MCF 10A (cell line): ENCODE measurements at regions of chr12 and their contacts with region 1.

Region 1: DNA sequence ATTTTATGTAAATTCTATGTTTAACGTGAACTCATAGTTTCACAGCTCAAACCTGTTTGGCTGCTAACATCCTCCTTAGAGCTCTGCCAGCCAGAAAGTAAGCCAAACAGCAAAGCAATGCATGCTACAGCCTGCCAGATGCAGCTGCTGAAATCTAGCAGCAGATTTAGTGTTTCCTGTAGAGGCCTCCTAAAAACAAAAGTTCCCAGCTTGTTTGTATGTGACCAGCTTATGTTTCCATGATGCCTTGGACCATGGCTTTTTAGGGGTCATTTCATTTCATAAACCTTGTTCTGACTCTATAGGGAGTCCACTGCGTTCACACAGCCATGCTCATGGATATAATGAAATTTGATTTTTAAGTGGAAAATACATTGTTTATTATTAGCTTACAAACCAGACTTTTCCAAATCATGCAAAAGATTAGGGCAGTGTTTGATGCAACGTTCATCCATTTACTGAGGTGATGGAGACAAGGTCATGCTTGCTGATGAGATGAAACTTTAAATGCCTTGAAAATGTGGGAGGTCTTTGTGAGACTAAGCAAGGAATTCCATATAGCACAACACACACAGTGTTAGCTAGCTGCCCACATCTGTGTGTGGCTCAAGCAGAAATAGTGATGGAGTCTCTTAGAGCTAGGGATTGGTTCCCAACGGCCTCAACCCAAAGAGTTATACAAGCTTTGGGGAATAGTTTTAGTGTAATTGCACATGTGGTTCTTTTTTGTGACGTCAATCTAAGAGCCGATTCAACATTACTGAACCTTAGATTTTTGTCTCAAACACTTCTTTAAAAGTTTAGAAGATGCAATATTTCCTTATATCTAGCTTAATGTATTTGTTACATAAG is 157.5 kb upstream of the LRIG3 start:
- DNase-seq: peak; percentile 49
- H3K4me3 Mint-ChIP-seq: no peak overlapping the region
- H3K27ac Mint-ChIP-seq: peak overlapping the region; percentile 86
- H3K4me1 Mint-ChIP-seq: peaks cover 43% of the 10 kb centered on the region
- H3K27me3 Mint-ChIP-seq: no peaks in the 10 kb centered on the region
- CTCF ChIP-seq: no peak

Region 2: DNA sequence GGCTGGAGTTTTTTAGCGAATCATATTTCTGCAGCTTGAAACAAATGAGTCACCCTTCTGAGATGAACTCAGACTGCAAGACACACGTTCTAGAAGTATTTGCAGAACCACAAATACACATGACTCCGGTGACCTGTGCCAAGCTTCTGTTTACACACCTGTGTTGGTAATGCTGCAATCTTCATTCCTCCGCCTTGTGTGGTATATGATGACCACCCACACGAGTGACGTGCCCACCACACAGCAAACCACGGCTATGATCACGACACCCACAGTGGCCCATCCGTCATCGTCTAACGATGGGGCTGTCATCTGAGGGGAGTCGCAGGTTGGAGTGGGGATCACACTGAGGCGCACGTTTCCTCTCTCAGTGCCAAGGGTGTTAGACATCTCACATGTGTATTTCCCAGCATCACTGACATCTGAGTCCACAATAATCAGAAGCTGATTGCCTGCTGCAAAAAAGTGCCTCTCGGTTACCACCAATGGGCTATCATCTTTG is 200.5 kb before region 1 on chr12:
- CTCF ChIA-PET with region 1: no interaction called
- POLR2A ChIA-PET with region 1: interaction called, 26 read pairs
- intact Hi-C with region 1: loop called (anchors 5 kb)
- DNase-seq: peak; percentile 94
- H3K4me3 Mint-ChIP-seq: no peak overlapping the region
- H3K27ac Mint-ChIP-seq: peak overlapping the region; percentile 51
- H3K4me1 Mint-ChIP-seq: peaks cover 17% of the 10 kb centered on the region
- H3K27me3 Mint-ChIP-seq: no peaks in the 10 kb centered on the region
- CTCF ChIP-seq: no peak

Region 3: GRCh38 chr12:59055204-59055839 is 22.5 kb before region 1 on chr12:
- CTCF ChIA-PET with region 1: interaction called, 3 read pairs
- POLR2A ChIA-PET with region 1: interaction called, 389 read pairs
- intact Hi-C with region 1: loop called (anchors 2 kb)
- DNase-seq: peak; percentile 88
- H3K4me3 Mint-ChIP-seq: peak overlapping the region; percentile 9
- H3K27ac Mint-ChIP-seq: peak overlapping the region; percentile 94
- H3K4me1 Mint-ChIP-seq: peaks cover 28% of the 10 kb centered on the region
- H3K27me3 Mint-ChIP-seq: no peaks in the 10 kb centered on the region
- CTCF ChIP-seq: no peak

Region 4: GRCh38 chr12:59067083-59067482 is 10.7 kb before region 1 on chr12:
- CTCF ChIA-PET with region 1: interaction called, 16 read pairs
- POLR2A ChIA-PET with region 1: interaction called, 96 read pairs
- intact Hi-C with region 1: no loop called
- DNase-seq: no peak
- H3K4me3 Mint-ChIP-seq: no peak overlapping the region
- H3K27ac Mint-ChIP-seq: peak overlapping the region; percentile 9
- H3K4me1 Mint-ChIP-seq: peaks cover 44% of the 10 kb centered on the region
- H3K27me3 Mint-ChIP-seq: no peaks in the 10 kb centered on the region
- CTCF ChIP-seq: no peak

Region 5: GRCh38 chr12:59396519-59396918 is 318.7 kb after region 1 on chr12:
- CTCF ChIA-PET with region 1: no interaction called
- POLR2A ChIA-PET with region 1: no interaction called
- intact Hi-C with region 1: no loop called
- DNase-seq: peak; percentile 45
- H3K4me3 Mint-ChIP-seq: no peak overlapping the region
- H3K27ac Mint-ChIP-seq: no peak overlapping the region
- H3K4me1 Mint-ChIP-seq: peaks cover 5% of the 10 kb centered on the region
- H3K27me3 Mint-ChIP-seq: no peaks in the 10 kb centered on the region
- CTCF ChIP-seq: no peak